Motor neuron (in vitro differentiated cells): ENCODE measurements at regions of chr13 and their contacts with region 1.

Region 1: GRCh38 chr13:79423801-79424642 is 18.0 kb upstream of the RBM26 start:
- ATAC-seq: peak in 3 of 8 experiments; percentile 43 to 68 (median 44)
- H3K4me3 ChIP-seq: no peak overlapping the region
- H3K27ac ChIP-seq: no peak overlapping the region
- H3K4me1 ChIP-seq: peaks cover 0 to 8% of the 10 kb centered on the region in 2 donors

Region 2: DNA sequence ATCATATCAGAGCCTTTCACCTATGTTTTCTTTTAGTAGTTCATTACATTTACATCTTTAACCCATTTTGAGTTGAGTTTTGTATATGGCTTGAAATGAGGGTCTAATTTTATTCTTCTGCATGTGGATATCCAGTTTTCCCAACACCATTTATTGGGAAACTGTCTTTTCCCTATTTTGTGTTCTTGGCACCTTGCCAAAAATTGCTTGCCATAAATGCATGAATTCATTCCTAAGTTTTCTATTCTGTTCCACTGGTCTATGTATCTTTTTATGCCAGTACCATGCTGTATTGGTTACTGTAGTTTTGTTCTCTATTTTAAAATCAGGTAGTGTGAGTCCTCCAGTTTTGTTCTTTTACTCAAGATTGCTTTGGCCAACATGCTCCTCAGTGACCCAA is 621.1 kb before region 1 on chr13:
- in situ Hi-C with region 1: no loop called
- ATAC-seq: no peak
- H3K4me3 ChIP-seq: no peak overlapping the region
- H3K27ac ChIP-seq: no peak overlapping the region
- H3K4me1 ChIP-seq: no peaks in the 10 kb centered on the region

Region 3: DNA sequence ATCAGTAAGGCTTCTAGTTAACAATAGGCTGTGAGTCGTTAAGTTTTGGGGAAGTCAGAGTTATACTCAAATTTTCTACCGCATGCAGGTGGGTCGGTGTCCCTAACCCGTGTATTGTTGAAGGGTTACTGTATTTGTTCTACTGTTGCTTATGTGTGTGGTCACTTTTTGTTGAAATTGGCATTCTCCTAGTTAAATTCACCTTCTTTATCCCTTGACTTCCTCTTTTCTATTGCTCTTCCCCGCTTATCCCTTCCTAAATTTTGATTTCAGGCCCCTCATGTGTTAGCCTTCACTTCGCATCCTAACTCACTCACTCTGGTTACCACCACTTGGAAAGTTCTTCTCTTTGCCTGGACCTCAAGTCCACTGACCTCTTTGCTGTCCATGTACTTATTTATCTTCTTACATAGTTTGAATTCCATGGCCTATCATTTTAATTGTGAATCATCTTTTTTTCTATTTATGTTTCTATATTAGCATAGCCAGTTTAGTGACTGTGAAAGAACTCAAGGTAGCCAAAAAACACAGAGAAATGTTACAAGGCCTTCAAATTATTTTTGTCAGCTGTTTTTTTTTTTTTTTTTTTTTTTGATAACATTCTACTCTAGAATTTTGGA is 109.9 kb after region 1 on chr13:
- in situ Hi-C with region 1: loop called in 3 of 9 experiments (anchors 10 to 25 kb)
- ATAC-seq: no peak
- H3K4me3 ChIP-seq: no peak overlapping the region
- H3K27ac ChIP-seq: no peak overlapping the region
- H3K4me1 ChIP-seq: no peaks in the 10 kb centered on the region

Region 4: DNA sequence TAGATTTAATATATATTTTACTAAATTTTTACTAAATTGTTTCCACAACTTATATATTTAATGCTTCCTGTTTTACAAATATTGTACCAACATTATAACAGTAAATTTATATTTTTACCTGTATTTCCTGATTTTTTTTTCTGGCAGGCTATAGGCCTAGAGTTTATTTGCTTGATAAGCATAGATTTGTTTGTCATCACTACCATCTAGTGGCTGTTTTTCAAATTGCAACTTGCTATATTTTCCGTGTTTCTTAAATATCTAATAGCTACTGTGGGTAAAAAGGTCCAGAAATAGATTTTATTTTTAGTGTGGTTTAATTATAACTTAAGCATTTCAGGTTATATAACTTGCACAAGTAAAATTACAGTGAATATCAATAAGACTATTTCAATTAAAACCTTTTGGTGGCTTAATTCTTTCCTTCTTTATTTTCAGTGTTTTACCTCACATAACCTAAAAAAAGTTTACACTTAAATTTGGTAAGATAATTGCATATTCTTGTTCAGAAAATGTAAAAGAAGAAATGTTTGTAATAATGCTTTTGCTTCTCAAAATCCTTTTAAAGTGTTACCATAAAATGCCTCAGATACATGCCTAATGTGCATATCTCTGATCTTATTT is 117.5 kb after region 1 on chr13:
- in situ Hi-C with region 1: loop called in 5 of 9 experiments (anchors 5 to 25 kb)
- ATAC-seq: peak in 3 of 8 experiments; percentile 32 to 41 (median 36)
- H3K4me3 ChIP-seq: no peak overlapping the region
- H3K27ac ChIP-seq: no peak overlapping the region
- H3K4me1 ChIP-seq: no peaks in the 10 kb centered on the region